ENCODE measurements at regions of chr2 and their contacts with region 1.

Region 1: GRCh38 chr2:62456721-62457539 is 49.1 kb downstream of the TMEM17 start:
- DNase-seq: peak; percentile 94
- ATAC-seq: peak; percentile 93
- H3K4me3 Mint-ChIP-seq: peak overlapping the region; percentile 68
- H3K27ac Mint-ChIP-seq: no peak overlapping the region
- H3K4me1 Mint-ChIP-seq: peaks cover 14% of the 10 kb centered on the region
- H3K27me3 Mint-ChIP-seq: peaks cover 31% of the 10 kb centered on the region
- CTCF ChIP-seq: peak; percentile 97

Region 2: DNA sequence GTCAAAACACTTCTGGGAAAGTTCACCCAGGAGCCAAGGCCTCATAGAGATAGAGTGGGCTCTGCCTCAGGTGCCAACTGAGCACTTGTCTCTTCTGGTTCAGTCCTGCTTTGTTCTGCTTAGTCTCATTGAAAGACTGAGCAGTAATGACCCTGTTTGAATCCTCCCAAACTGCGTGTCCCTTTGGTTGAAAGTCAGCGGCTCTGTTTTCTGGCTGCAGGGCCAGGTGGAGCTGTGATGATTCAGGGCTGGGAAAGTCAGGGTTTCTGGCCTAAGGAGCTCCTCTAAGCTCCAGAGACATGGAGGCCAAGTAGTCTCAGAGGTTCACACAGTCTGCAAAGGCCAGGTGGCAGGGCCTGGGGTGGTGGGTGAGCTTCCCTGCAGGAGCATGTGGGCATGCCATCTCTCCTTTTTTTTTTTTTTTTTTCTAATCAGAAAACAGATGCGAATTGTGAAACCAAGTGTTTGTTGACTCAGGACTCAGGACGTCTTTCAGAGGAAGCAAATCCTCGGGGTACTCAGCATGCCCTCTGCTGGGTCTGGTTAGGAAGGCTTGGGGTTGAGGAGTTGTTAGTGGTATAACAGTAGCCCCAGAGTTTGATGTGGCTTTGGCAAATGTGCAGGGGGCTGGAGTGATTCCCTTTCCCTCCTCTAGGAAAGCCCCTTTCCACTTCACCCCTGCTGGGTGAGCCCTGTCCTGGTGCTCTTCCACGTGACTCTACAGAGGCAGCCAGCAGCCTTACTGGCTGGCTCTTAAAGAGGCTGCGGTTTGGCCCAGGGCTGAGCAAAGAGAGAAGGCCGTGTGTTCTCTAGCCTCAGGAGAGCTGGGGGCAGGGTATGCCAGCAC is 10.8 kb after region 1 on chr2:
- CTCF ChIA-PET with region 1: interaction called, 34 read pairs
- POLR2A ChIA-PET with region 1: interaction called, 4 read pairs
- DNase-seq: no peak
- ATAC-seq: no peak
- H3K4me3 Mint-ChIP-seq: no peak overlapping the region
- H3K27ac Mint-ChIP-seq: peak overlapping the region; percentile 24; the same call in 1 of the 2 replicates
- H3K4me1 Mint-ChIP-seq: peaks cover 50% of the 10 kb centered on the region
- H3K27me3 Mint-ChIP-seq: no peaks in the 10 kb centered on the region
- CTCF ChIP-seq: no peak

Region 3: GRCh38 chr2:62505750-62506420 is 49.0 kb after region 1 on chr2 and contains the start of gene TMEM17:
- CTCF ChIA-PET with region 1: interaction called, 13 read pairs
- POLR2A ChIA-PET with region 1: no interaction called
- DNase-seq: peak; percentile 94
- ATAC-seq: peak; percentile 92
- H3K4me3 Mint-ChIP-seq: peak within 1 kb of the TSS; percentile 78
- H3K27ac Mint-ChIP-seq: peak within 1 kb of the TSS; percentile 89
- H3K4me1 Mint-ChIP-seq: peaks cover 10% of the 10 kb centered on the region
- H3K27me3 Mint-ChIP-seq: no peaks in the 10 kb centered on the region
- CTCF ChIP-seq: no peak
- total RNA-seq, gene TMEM17: 0.66 to 1.2 TPM (median 1.1 TPM) in 3 replicates

Region 4: GRCh38 chr2:62660582-62661262 is 203.8 kb after region 1 on chr2:
- CTCF ChIA-PET with region 1: interaction called, 19 read pairs
- POLR2A ChIA-PET with region 1: no interaction called
- DNase-seq: no peak
- ATAC-seq: no peak
- H3K4me3 Mint-ChIP-seq: no peak overlapping the region
- H3K27ac Mint-ChIP-seq: no peak overlapping the region
- H3K4me1 Mint-ChIP-seq: peaks cover 15% of the 10 kb centered on the region
- H3K27me3 Mint-ChIP-seq: no peaks in the 10 kb centered on the region
- CTCF ChIP-seq: no peak

Region 5: GRCh38 chr2:62774555-62775366 is 317.8 kb after region 1 on chr2:
- CTCF ChIA-PET with region 1: interaction called, 67 read pairs
- POLR2A ChIA-PET with region 1: interaction called, 3 read pairs
- DNase-seq: no peak
- ATAC-seq: no peak
- H3K4me3 Mint-ChIP-seq: no peak overlapping the region
- H3K27ac Mint-ChIP-seq: no peak overlapping the region; the same call in 1 of the 2 replicates
- H3K4me1 Mint-ChIP-seq: peaks cover 14% of the 10 kb centered on the region
- H3K27me3 Mint-ChIP-seq: no peaks in the 10 kb centered on the region
- CTCF ChIP-seq: peak; percentile 35; the same call in 1 of the 2 replicates